Posterior vena cava (tissue), 2 donors: ENCODE measurements at regions of chr2 and their contacts with region 1.

Region 1: GRCh38 chr2:8704906-8705305 is 23.1 kb downstream of the ID2 start:
- DNase-seq: no peak

Region 2: GRCh38 chr2:7649461-7650228 is 1055.3 kb before region 1 on chr2:
- intact Hi-C with region 1: loop called in 1 of 2 experiments (anchors 10 kb)
- DNase-seq: no peak

Region 3: DNA sequence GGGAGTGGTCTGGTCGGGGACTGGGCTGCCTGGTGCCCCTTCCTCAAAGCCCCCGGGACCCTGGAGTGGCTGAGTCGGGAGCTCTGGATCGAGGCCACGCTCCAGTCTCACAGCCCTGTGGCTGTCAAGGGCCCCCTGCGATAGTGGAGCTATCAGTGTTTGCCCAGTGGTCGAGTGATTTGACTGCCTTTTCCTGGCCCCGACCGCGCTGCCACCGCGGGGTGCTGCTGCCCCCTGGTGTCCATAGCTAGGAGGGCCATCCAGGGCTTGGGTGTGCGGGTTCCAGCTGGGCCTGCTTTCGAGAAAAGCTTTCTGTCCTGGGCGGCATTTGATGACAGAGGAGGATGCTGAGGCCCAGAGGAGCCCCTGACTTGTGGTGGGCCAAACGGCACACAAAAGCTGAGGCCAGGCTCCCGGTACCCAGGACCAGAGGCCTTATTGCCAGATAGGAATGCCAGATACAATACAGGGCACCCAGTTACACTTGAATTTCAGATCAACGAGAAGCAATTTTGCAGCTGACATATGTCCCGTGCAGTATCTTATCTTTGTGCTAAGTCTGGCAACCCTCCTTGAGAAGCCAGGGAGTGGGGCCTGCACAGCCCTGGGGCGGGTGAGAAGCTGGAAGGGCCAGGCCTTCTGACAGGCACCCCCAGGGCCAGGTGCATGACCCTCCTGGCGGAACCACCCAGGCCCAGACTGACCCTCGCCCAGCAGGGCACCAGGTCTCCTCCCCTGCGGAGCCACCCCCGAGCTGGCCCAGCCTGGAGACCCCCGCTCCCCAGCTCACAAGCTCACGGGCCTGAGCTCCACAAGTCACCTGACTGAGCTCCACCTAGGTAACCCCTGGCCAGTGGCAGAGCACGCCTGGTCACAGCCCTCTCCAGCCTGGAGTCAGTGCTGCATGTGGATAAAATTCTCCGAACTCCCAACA is 1730.2 kb after region 1 on chr2:
- intact Hi-C with region 1: no loop called
- DNase-seq: peak; percentile 93